Tibial artery (tissue), 4 donors: ENCODE measurements at regions of chr1 and their contacts with region 1.

Region 1: GRCh38 chr1:162612606-162613400 is 19.5 kb upstream of the DDR2 start:
- DNase-seq: peak; percentile 78 to 83
- H3K4me3 ChIP-seq: no peak overlapping the region
- H3K27ac ChIP-seq: peak overlapping the region; percentile 61 to 78
- H3K4me1 ChIP-seq: peaks cover 0 to 17% (median 13%) of the 10 kb centered on the region in 4 donors
- H3K27me3 ChIP-seq: no peaks in the 10 kb centered on the region
- CTCF ChIP-seq: no peak

Region 2: DNA sequence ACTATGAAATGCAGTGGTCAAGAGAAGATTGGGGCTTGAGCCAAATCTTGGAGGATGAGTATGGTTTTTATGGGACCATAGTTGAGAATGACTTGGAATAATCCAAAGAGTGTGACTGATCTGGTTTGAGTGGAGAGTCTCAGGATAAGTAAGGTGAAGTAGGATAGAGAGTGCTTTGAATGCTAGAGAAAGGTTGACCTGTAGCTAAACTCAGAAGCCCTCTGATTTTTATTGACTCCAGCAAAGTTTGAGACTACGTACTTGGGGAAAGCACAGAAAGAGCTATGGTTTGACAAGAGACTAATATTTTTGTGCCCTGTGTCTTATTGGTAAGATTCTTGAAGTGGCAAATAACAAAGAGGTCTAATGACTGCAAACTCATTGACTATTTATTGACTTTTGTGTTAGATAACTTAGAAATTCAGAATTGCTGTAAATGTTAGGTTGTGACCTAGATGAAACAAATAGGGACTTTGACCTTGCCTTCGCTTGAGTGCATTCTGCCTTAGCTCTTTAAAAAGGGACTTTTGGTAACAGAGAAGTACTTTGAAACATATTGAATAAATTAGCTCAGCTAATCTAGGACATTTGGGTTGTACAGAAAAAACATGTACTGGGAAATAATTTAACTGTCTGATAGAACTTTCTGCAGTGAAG is 16.2 kb before region 1 on chr1:
- intact Hi-C with region 1: no loop called
- DNase-seq: no peak
- H3K4me3 ChIP-seq: no peak overlapping the region
- H3K27ac ChIP-seq: no peak overlapping the region
- H3K4me1 ChIP-seq: no peaks in the 10 kb centered on the region
- H3K27me3 ChIP-seq: no peaks in the 10 kb centered on the region
- CTCF ChIP-seq: no peak

Region 3: GRCh38 chr1:162678439-162678838 is 65.6 kb after region 1 on chr1:
- intact Hi-C with region 1: no loop called
- DNase-seq: no peak
- H3K4me3 ChIP-seq: no peak overlapping the region
- H3K27ac ChIP-seq: peak overlapping the region in 1 of 2 donors; percentile 27
- H3K4me1 ChIP-seq: peaks cover 0 to 64% (median 32%) of the 10 kb centered on the region in 4 donors
- H3K27me3 ChIP-seq: no peaks in the 10 kb centered on the region
- CTCF ChIP-seq: no peak

Region 4: DNA sequence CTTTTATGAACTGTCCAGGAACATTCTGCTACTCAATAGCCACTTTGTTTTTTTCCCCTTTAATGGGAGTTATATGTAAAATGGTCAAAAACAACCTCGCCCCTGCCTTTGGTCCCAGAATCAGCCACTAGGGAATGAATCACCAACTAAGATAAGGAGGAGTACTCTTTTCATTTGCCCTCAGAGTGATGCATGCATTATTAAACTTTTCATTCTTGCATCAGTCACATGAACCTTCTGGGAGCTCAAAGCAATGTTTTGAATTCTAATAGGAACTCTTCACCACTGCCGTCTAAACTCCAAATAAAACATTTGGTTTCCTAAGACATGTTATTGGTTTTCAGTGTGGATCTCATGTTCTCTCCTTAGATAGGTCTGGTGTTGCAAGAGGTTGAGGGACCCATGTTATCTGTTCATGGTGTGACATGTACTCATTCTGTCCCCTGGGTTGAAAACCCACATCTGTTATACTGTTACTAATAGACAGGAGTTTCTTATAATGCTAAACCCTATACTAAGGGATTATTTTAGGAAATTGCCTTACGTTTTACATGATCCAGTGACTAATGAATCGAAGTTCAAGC is 159.9 kb after region 1 on chr1:
- intact Hi-C with region 1: loop called (anchors 10 kb)
- DNase-seq: peak in 1 of 2 donors; percentile 65
- H3K4me3 ChIP-seq: no peak overlapping the region
- H3K27ac ChIP-seq: peak overlapping the region in 1 of 2 donors; percentile 13
- H3K4me1 ChIP-seq: no peaks in the 10 kb centered on the region
- H3K27me3 ChIP-seq: no peaks in the 10 kb centered on the region
- CTCF ChIP-seq: no peak